ENCODE measurements at regions of chrX and their contacts with region 1.

Region 1: GRCh38 chrX:21985332-21985777 is 44.8 kb downstream of the SMS start:
- DNase-seq: peak; percentile 82
- ATAC-seq: peak; percentile 97
- H3K4me3 ChIP-seq: no peak overlapping the region
- H3K27ac ChIP-seq: no peak overlapping the region
- H3K4me1 ChIP-seq: 0 out of 2 replicates have a peak, but pooled peaks cover 2% of the 10 kb centered on the region
- H3K27me3 ChIP-seq: no peaks in the 10 kb centered on the region
- CTCF ChIP-seq: peak; percentile 99
- POLR2A ChIP-seq: no peak
- RAD21 ChIP-seq: peak; percentile 86

Region 2: DNA sequence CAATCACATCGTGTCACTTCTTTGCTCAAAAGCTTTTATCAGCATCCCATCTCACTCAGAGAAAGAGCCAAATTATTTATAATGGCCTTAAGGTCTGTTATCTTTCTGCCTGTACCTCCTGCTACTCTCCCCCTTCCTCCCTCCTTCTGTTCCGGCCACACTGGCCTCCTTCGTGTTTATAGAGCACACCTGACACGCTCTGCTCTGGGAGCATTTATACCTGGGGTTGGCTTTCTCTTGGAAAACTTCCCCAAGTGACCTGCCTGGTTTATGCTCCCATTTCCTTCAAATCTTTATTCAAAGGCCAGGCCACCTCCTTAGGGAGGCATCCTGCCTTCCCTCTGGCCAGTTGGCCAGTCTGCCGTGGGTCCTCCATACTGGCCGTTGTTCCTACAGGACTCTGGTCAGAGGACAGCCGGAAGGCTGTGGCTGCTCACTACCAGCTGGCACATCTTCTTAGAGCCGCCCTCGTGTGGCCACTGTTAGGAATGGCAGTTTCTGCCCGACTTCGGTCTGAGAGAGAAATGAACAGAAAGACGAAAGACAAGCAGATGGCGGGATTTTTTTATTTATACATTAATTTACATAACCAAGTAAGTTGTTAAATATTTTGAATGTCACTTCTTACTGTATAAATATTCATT is 207.2 kb after region 1 on chrX:
- CTCF ChIA-PET with region 1: interaction called, 5 read pairs
- POLR2A ChIA-PET with region 1: no interaction called
- dilution Hi-C with region 1: no loop called
- in situ Hi-C with region 1: no loop called
- intact Hi-C with region 1: loop called (anchors 1 kb)
- DNase-seq: peak; percentile 56
- ATAC-seq: peak; percentile 94
- H3K4me3 ChIP-seq: no peak overlapping the region
- H3K27ac ChIP-seq: no peak overlapping the region
- H3K4me1 ChIP-seq: no peaks in the 10 kb centered on the region
- H3K27me3 ChIP-seq: no peaks in the 10 kb centered on the region; the same call in 1 of the 2 replicates
- CTCF ChIP-seq: peak; percentile 70
- POLR2A ChIP-seq: no peak
- RAD21 ChIP-seq: peak; percentile 68

Region 3: DNA sequence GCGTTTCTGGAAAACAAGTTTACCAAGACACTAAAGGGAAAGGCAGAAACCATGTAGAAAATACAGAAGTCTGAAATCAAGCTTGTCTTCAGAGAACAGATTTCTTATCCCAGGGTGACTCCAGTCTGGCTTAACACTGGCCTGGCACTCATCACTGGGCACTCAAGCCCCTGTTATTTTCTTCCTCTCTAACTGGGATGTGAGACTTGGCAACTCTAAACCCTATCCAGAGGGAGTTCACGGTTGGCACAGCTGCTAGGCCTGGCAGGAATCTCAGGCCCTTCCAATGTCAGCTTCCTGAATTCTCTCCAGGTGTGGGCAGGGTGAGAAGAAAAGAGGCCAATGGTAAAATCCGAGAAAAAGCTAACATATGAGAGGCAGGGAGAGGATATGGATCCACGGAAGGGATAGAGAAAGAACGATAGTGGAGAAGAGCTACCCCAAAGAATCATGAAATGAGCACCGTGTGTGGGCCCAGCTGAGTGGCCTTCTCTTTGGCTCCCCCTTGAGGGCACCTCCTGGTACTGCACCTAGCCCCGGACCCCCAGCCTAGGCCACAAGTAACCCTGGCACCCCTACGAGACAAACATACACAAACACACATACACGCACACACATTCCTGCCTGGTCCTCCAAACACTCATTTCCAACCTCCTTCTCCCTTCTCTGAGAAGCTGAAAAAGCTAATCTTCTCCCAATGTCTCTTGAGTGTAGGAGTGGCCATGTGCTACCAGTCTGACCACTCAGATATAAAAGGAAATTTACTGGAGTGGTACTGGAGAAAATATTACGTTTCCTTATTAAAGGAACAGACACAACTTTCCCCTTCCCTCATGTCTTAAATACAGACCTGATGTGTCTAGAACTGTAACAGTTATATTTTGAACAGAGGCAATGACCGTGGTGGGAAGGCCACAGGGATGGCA is 1332.7 kb after region 1 on chrX:
- CTCF ChIA-PET with region 1: interaction called, 4 read pairs
- POLR2A ChIA-PET with region 1: no interaction called
- dilution Hi-C with region 1: no loop called
- in situ Hi-C with region 1: no loop called
- intact Hi-C with region 1: loop called (anchors 5 kb)
- DNase-seq: no peak
- ATAC-seq: peak; percentile 80
- H3K4me3 ChIP-seq: no peak overlapping the region
- H3K27ac ChIP-seq: no peak overlapping the region
- H3K4me1 ChIP-seq: no peaks in the 10 kb centered on the region
- H3K27me3 ChIP-seq: no peaks in the 10 kb centered on the region
- CTCF ChIP-seq: peak; percentile 52
- POLR2A ChIP-seq: no peak
- RAD21 ChIP-seq: peak; percentile 56

Region 4: DNA sequence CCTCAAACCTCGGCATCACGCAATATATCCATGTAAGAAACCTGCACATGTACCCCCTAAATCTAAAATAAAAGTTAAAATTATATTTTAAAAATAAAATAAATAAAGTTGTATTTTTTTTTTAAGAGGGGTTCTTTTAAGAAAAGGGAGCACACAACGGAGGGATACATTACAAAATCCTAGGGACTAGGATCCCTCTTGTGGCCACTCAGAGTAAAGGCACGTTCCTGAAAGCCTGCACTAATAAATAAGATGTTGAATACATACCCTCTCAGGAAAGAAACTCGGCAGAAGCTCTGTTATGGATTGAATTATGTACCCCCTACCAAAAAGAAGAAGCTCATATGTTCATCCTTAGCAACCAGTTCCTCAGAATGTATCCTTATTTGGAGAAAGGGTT is 1631.0 kb after region 1 on chrX:
- CTCF ChIA-PET with region 1: no interaction called
- POLR2A ChIA-PET with region 1: no interaction called
- dilution Hi-C with region 1: no loop called
- in situ Hi-C with region 1: no loop called
- intact Hi-C with region 1: loop called (anchors 1 kb)
- DNase-seq: peak; percentile 38
- ATAC-seq: peak; percentile 79
- H3K4me3 ChIP-seq: no peak overlapping the region
- H3K27ac ChIP-seq: no peak overlapping the region
- H3K4me1 ChIP-seq: no peaks in the 10 kb centered on the region
- H3K27me3 ChIP-seq: peaks cover 2% of the 10 kb centered on the region
- CTCF ChIP-seq: peak; percentile 55
- POLR2A ChIP-seq: no peak
- RAD21 ChIP-seq: peak; percentile 54